ENCODE measurements at regions of chr19 and their contacts with region 1.

Region 1: GRCh38 chr19:15555759-15556633 is 47.7 kb downstream of the CYP4F22 start:
- H3K4me3 ChIP-seq: peak overlapping the region; percentile 20
- H3K27ac ChIP-seq: no peak overlapping the region
- H3K4me1 ChIP-seq: peaks cover 2% of the 10 kb centered on the region; the same call in 1 of the 2 replicates
- CTCF ChIP-seq: peak; percentile 84

Region 2: DNA sequence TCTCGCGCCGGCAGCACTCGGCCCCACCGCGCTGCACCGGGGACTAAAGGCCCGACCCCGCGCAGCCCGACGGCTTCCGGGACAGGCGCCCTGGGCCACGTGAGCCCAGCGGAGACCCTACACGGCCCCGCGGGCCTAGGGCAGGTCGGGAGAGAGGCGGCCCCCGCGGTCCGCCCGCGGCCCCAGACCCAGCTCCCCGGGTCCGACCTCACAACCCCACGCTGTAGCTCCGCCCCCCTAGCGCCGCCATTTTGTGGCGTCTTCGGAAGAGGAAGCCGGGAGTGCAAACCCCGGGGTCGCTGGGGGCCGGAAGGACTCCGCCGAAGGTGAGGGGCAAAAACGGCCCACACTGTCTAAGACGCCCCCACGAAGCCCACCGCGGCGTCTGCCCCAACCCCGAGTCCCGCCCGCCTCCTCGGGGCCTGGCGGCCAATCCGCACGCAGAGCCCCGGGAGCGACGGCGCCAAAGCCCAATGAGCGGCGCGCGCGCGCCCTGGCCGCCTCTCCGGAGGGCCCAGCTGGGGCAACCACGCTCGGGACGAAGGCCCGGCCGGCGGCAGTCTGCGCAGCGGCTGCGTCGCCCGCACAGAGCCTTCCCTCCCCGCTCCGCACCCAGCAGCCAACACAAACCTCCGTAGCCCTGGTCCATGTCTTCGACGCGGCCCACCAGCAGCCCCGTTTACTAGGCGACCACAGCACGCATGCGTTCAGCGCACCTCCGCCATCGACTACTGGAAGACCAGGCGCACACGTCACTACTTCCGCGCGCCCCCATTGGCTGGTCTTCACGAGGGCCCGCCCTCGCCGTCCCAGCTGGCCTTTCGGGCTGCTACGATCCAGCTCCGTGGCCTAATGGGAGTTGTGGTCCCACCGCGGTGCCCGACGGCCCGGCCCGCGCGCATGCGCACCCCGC is 176.7 kb before region 1 on chr19 and contains the start of gene AKAP8:
- CTCF ChIA-PET with region 1: interaction called, 5 read pairs
- POLR2A ChIA-PET with region 1: interaction called, 10 read pairs
- H3K4me3 ChIP-seq: peak within 1 kb of the TSS; percentile 98
- H3K27ac ChIP-seq: peak within 1 kb of the TSS; percentile 89
- H3K4me1 ChIP-seq: peaks cover 6% of the 10 kb centered on the region
- CTCF ChIP-seq: no peak

Region 3: DNA sequence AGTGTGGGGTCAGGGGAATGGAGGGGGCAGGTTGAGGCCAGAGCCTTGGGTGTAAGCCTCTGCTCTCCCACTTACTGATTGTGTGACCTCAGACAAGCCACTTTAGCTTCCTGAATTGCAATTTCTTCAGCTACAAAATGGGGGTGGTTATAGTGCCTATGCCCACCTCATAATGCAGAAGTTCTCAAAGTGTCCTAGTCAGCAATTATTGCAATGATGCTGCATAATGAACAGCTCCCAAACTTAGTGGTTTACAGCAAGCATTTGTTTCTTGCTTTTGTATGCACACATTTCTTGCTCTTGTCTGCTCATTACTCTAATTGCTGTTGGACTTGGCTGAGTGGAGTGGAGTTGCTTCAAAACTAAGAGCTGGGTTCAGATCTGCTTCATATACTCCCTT is 11.7 kb before region 1 on chr19:
- CTCF ChIA-PET with region 1: interaction called, 12 read pairs
- POLR2A ChIA-PET with region 1: no interaction called
- H3K4me3 ChIP-seq: no peak overlapping the region
- H3K27ac ChIP-seq: no peak overlapping the region
- H3K4me1 ChIP-seq: no peaks in the 10 kb centered on the region
- CTCF ChIP-seq: no peak